IMR-90 (cell line): ENCODE measurements at regions of chr6 and their contacts with region 1.

Region 1: GRCh38 chr6:127807806-127808517 is 92.9 kb downstream of the THEMIS start:
- DNase-seq: no peak
- ATAC-seq: no peak
- H3K4me3 ChIP-seq: no peak overlapping the region
- H3K27ac ChIP-seq: no peak overlapping the region
- H3K4me1 ChIP-seq: no peaks in the 10 kb centered on the region
- H3K27me3 ChIP-seq: peaks cover 5% of the 10 kb centered on the region
- CTCF ChIP-seq: no peak
- POLR2A ChIP-seq: no peak
- RAD21 ChIP-seq: no peak

Region 2: DNA sequence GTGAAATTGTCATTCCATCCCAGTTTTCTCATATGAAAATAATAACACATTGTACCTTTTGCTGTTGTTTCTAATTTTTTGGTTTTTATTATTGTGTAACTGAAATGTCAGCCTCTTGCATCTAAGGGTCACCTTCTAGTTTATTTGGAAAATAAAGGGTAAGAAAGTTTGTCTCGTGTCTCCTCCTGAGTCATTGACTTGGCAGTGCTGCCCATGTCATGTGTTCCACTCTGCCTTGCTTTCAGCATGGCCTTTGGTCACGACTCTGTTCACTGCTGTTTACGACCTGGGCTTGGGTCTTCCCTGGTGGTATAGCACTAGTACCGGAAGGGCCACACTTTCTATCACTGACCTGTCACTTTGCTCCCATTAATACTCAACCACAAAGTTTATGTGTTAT is 860.9 kb before region 1 on chr6:
- CTCF ChIA-PET with region 1: no interaction called
- POLR2A ChIA-PET with region 1: no interaction called
- dilution Hi-C with region 1: no loop called
- in situ Hi-C with region 1: no loop called
- intact Hi-C with region 1: no loop called
- DNase-seq: peak; percentile 2
- ATAC-seq: no peak; the same call in 1 of the 2 replicates
- H3K4me3 ChIP-seq: no peak overlapping the region
- H3K27ac ChIP-seq: no peak overlapping the region
- H3K4me1 ChIP-seq: peaks cover 2% of the 10 kb centered on the region; the same call in 1 of the 2 replicates
- H3K27me3 ChIP-seq: no peaks in the 10 kb centered on the region
- CTCF ChIP-seq: no peak
- POLR2A ChIP-seq: no peak
- RAD21 ChIP-seq: no peak

Region 3: GRCh38 chr6:127768745-127769144 is 39.2 kb before region 1 on chr6:
- CTCF ChIA-PET with region 1: no interaction called
- POLR2A ChIA-PET with region 1: no interaction called
- dilution Hi-C with region 1: no loop called
- in situ Hi-C with region 1: no loop called
- intact Hi-C with region 1: no loop called
- DNase-seq: no peak
- ATAC-seq: no peak
- H3K4me3 ChIP-seq: no peak overlapping the region
- H3K27ac ChIP-seq: no peak overlapping the region
- H3K4me1 ChIP-seq: no peaks in the 10 kb centered on the region
- H3K27me3 ChIP-seq: no peaks in the 10 kb centered on the region
- CTCF ChIP-seq: no peak
- POLR2A ChIP-seq: no peak
- RAD21 ChIP-seq: no peak

Region 4: DNA sequence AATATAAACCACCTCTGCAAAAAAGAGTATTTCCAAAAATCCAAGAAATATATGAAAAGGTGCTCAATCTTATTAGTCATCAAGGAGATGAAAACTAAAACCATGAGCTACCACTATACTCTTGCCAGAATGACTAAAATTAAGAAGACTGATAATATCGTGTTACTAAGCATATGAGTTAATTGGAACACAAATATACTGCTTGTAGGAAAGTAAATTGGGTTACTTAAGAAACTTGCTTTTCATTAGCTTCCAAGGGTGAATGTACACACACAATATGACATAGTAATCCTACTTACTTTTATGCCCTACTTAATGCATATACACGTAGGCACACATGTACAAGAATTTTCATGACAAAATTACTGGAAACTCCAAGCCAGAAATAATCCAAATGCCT is 89.5 kb after region 1 on chr6:
- CTCF ChIA-PET with region 1: no interaction called
- POLR2A ChIA-PET with region 1: no interaction called
- dilution Hi-C with region 1: no loop called
- in situ Hi-C with region 1: no loop called
- intact Hi-C with region 1: loop called (anchors 5 kb)
- DNase-seq: no peak
- ATAC-seq: no peak
- H3K4me3 ChIP-seq: no peak overlapping the region
- H3K27ac ChIP-seq: no peak overlapping the region
- H3K4me1 ChIP-seq: no peaks in the 10 kb centered on the region
- H3K27me3 ChIP-seq: no peaks in the 10 kb centered on the region
- CTCF ChIP-seq: no peak
- POLR2A ChIP-seq: no peak
- RAD21 ChIP-seq: no peak